IMR-90 (cell line): ENCODE measurements at regions of chr18 and their contacts with region 1.

Region 1: DNA sequence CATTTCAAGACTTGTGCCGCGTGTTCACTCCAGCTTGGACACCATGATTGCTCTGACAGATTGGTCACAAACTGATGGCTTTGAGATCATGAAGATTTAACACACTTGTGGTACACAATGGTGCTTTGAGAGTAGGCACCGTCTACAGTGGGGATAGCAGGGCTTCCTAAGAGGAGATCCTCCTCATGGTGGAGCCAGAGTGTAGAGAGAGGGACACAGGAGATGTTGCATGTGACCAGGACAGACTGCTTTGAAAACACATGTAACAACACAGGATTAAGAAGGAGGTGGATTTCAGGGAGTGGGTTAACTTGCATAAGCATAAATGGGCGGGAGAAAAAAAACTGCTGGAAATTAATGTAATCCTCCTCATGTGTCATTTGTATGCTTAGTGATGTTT is 95.7 kb upstream of the LINC00305 start:
- DNase-seq: no peak
- ATAC-seq: no peak
- H3K4me3 ChIP-seq: no peak overlapping the region
- H3K27ac ChIP-seq: no peak overlapping the region
- H3K4me1 ChIP-seq: no peaks in the 10 kb centered on the region
- H3K27me3 ChIP-seq: no peaks in the 10 kb centered on the region
- CTCF ChIP-seq: no peak
- POLR2A ChIP-seq: no peak
- RAD21 ChIP-seq: no peak

Region 2: DNA sequence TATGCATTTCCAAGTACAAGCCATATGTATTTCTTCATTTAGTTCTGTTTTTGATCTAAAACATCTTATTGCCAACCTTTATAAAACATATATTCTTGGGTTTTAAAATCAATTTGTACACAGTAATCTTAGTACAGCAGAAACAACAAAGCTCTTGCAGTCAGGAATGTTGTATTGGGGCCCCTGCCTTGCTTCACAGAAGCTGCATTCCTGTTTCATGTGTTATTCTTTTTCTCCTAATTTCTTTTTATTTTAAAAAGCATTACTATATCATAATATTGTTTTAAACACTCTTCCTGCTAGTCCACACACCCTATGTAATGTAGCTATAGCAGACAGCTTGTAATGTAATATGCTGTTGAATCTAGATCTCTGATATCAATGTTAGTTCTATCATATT is 445.4 kb before region 1 on chr18:
- CTCF ChIA-PET with region 1: no interaction called
- POLR2A ChIA-PET with region 1: no interaction called
- dilution Hi-C with region 1: no loop called
- in situ Hi-C with region 1: no loop called
- intact Hi-C with region 1: no loop called
- DNase-seq: no peak
- ATAC-seq: peak; percentile 60
- H3K4me3 ChIP-seq: no peak overlapping the region
- H3K27ac ChIP-seq: no peak overlapping the region
- H3K4me1 ChIP-seq: peaks cover 1% of the 10 kb centered on the region; the same call in 1 of the 2 replicates
- H3K27me3 ChIP-seq: no peaks in the 10 kb centered on the region
- CTCF ChIP-seq: no peak
- POLR2A ChIP-seq: no peak
- RAD21 ChIP-seq: no peak

Region 3: DNA sequence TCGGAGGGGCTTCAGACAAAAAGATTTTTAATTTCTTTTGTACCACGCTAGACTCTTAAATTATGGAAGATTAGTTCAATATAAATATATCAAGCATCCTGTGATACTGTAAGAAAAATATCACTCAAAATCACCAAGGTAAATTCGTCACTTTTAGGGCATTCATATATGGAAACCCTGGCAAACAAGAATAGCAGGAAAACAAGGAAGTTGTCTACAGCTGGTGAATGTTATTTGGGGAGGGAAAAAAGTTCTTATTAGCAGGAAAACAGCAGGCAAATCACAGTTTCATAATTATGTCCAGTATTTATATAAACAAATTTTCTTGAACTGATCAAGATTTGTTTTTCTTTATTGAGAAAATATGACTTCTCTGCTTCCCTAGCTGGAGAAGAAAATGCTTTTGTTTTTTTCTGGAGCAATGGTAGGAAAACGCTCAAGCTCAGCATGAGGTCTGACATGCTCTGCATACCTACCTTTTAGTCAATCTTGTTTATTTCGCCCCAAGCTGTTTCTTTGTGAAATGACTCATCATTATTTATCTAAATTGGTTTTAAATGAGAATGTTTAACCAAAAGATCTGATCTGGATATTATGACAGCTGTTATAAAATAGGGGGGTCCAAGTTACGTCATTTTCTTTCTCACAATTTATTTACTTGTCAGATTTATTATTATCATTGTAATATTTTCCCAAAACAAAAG is 110.4 kb before region 1 on chr18:
- CTCF ChIA-PET with region 1: no interaction called
- POLR2A ChIA-PET with region 1: no interaction called
- dilution Hi-C with region 1: no loop called
- in situ Hi-C with region 1: loop called (anchors 25 kb)
- intact Hi-C with region 1: no loop called
- DNase-seq: no peak
- ATAC-seq: no peak
- H3K4me3 ChIP-seq: no peak overlapping the region
- H3K27ac ChIP-seq: no peak overlapping the region
- H3K4me1 ChIP-seq: no peaks in the 10 kb centered on the region
- H3K27me3 ChIP-seq: no peaks in the 10 kb centered on the region
- CTCF ChIP-seq: no peak
- POLR2A ChIP-seq: no peak
- RAD21 ChIP-seq: no peak

Region 4: GRCh38 chr18:64259871-64260270 is 15.3 kb after region 1 on chr18:
- CTCF ChIA-PET with region 1: no interaction called
- POLR2A ChIA-PET with region 1: interaction called, 15 read pairs
- dilution Hi-C with region 1: no loop called
- in situ Hi-C with region 1: no loop called
- intact Hi-C with region 1: no loop called
- DNase-seq: no peak
- ATAC-seq: no peak
- H3K4me3 ChIP-seq: no peak overlapping the region
- H3K27ac ChIP-seq: no peak overlapping the region
- H3K4me1 ChIP-seq: no peaks in the 10 kb centered on the region
- H3K27me3 ChIP-seq: no peaks in the 10 kb centered on the region
- CTCF ChIP-seq: no peak
- POLR2A ChIP-seq: no peak
- RAD21 ChIP-seq: no peak

Region 5: GRCh38 chr18:64271246-64271645 is 26.7 kb after region 1 on chr18:
- CTCF ChIA-PET with region 1: no interaction called
- POLR2A ChIA-PET with region 1: no interaction called
- dilution Hi-C with region 1: no loop called
- in situ Hi-C with region 1: no loop called
- intact Hi-C with region 1: loop called (anchors 1 kb)
- DNase-seq: no peak
- ATAC-seq: no peak
- H3K4me3 ChIP-seq: no peak overlapping the region
- H3K27ac ChIP-seq: no peak overlapping the region
- H3K4me1 ChIP-seq: no peaks in the 10 kb centered on the region
- H3K27me3 ChIP-seq: no peaks in the 10 kb centered on the region
- CTCF ChIP-seq: no peak
- POLR2A ChIP-seq: no peak
- RAD21 ChIP-seq: no peak

Region 6: DNA sequence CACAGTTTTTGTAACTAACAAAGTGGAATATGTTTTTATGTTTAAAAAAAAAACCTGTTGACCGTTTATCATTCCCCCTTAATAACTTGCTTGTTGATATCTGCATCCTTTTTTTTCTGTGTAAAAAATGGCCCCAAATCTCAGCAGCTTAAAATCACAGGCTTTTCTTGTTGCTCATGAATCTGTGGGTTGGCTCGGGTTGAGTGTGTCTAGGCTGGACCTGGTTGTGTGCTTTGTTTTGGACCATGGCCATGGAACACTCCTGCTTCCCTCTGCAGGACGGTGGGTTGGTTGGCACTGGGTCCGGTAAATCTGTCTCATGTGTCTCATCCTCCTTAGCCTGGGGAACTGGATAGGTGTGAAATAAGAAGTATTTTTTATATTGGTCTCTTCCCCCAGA is 43.4 kb after region 1 on chr18:
- CTCF ChIA-PET with region 1: no interaction called
- POLR2A ChIA-PET with region 1: no interaction called
- dilution Hi-C with region 1: no loop called
- in situ Hi-C with region 1: no loop called
- intact Hi-C with region 1: no loop called
- DNase-seq: no peak
- ATAC-seq: no peak
- H3K4me3 ChIP-seq: no peak overlapping the region
- H3K27ac ChIP-seq: no peak overlapping the region
- H3K4me1 ChIP-seq: no peaks in the 10 kb centered on the region
- H3K27me3 ChIP-seq: no peaks in the 10 kb centered on the region
- CTCF ChIP-seq: no peak
- POLR2A ChIP-seq: no peak
- RAD21 ChIP-seq: no peak

Region 7: DNA sequence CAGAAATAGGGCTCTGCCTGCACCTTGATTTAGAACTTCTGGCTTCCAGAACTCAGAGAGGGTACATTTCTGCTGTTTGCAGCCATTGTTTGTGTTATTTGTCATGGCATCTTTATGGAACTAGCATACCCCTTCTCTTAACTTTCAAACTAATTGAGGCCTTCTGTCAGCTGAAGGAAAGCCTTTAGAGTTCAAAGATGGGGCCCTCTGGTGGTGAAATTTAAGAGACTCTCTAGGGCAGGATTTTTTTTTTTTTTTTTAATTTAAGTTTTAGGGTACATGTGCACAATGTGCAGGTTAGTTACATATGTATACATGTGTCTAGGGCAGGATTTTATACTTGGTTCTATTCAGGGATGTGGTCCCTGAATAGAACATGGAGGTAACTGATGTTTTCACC is 164.9 kb after region 1 on chr18:
- CTCF ChIA-PET with region 1: interaction called, 10 read pairs
- POLR2A ChIA-PET with region 1: no interaction called
- dilution Hi-C with region 1: no loop called
- in situ Hi-C with region 1: no loop called
- intact Hi-C with region 1: no loop called
- DNase-seq: no peak
- ATAC-seq: no peak
- H3K4me3 ChIP-seq: no peak overlapping the region
- H3K27ac ChIP-seq: no peak overlapping the region
- H3K4me1 ChIP-seq: no peaks in the 10 kb centered on the region
- H3K27me3 ChIP-seq: no peaks in the 10 kb centered on the region
- CTCF ChIP-seq: no peak
- POLR2A ChIP-seq: no peak
- RAD21 ChIP-seq: no peak